ENCODE measurements at regions of chr13 and their contacts with region 1.

Region 1: GRCh38 chr13:28324181-28324789 is 170.6 kb downstream of the FLT1 start:
- DNase-seq: peak in 41 of 42 donors; percentile 7 to 81 (median 58)

Region 2: DNA sequence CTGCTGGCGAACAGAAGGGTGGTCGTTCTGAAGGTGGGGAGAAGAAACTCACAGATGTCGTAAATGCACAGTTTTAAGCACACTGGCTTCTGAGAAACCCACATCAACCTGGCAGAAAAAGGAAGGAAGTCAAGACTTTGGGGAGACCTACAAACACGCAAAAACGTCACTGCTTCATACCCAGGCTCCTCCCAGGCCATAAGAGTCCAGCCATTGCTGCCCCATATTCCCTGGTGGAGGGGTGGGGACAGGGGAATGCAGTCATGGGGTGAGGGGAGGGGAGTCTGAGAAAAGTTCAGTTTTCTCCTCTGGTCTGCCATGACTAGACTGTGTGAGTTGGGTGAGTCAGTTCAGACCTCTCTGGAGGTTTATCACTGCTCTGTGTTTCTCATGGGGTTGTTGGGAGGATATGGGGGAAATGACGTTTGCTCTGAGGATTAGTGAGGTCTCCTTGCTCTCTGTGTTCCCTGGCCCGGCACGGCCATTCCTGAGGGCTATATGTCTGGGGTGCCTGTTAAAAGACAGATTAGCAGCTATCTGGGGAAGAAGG is 31.6 kb after region 1 on chr13:
- intact Hi-C with region 1: no loop called
- DNase-seq: no peak

Region 3: GRCh38 chr13:28636674-28637317 is 312.5 kb after region 1 on chr13:
- intact Hi-C with region 1: loop called (anchors 10 kb)
- DNase-seq: peak in 41 of 42 donors; percentile 18 to 82 (median 54)

Measured in head of caudate nucleus (tissue), 42 donors.